Activated naive CD4-positive, alpha-beta T cell treated with anti-CD3 and anti-CD28 coated beads for 36 hours (primary cell): ENCODE measurements at regions of chr5 and their contacts with region 1.

Region 1: DNA sequence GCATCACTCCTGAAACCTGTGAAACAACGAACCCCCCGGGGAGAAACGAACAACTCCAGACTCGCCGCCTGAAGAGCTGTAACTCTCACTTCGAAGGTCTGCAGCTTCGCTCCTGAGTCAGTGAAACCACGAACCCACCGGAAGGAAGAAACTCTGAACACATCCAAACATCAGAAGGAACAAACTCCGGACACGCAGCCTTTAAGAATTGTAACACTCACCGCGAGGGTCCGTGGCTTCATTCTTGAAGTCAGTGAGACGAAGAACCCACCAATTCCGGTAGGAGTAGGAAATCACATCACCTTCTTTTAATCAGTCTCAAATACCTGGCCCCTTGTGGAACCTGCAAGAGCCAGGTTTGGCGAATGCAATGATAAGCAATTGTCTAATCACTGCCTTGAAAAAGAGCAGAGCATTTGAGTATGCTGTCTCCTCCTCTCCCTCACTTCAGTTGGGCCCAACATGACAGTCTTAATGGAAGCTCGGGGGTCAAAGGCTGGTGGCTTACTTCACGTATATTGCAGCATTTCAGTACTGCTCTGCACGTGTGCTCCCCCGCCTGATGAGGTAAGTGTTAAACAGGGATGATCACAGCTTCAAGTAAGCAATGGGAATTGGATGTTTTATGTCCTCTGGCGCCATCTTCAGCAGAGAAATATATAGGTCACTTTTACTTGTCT is 473 bp downstream of the IRGM start:
- DNase-seq: peak; percentile 83
- H3K4me3 Mint-ChIP-seq: peak overlapping the region; percentile 79
- H3K27ac Mint-ChIP-seq: peak overlapping the region; percentile 80
- H3K4me1 Mint-ChIP-seq: peaks cover 25% of the 10 kb centered on the region
- H3K27me3 Mint-ChIP-seq: no peaks in the 10 kb centered on the region

Region 2: GRCh38 chr5:150560401-150561193 is 286.2 kb before region 1 on chr5:
- CTCF ChIA-PET with region 1: interaction called, 63 read pairs
- intact Hi-C with region 1: loop called (anchors 1 kb)
- DNase-seq: peak; percentile 96
- H3K4me3 Mint-ChIP-seq: no peak overlapping the region
- H3K27ac Mint-ChIP-seq: no peak overlapping the region
- H3K4me1 Mint-ChIP-seq: no peaks in the 10 kb centered on the region
- H3K27me3 Mint-ChIP-seq: no peaks in the 10 kb centered on the region

Region 3: GRCh38 chr5:150656191-150657132 is 190.3 kb before region 1 on chr5:
- CTCF ChIA-PET with region 1: interaction called, 4 read pairs
- intact Hi-C with region 1: loop called (anchors 1 kb)
- DNase-seq: peak; percentile 77
- H3K4me3 Mint-ChIP-seq: peak overlapping the region; percentile 76
- H3K27ac Mint-ChIP-seq: no peak overlapping the region
- H3K4me1 Mint-ChIP-seq: peaks cover 2% of the 10 kb centered on the region
- H3K27me3 Mint-ChIP-seq: no peaks in the 10 kb centered on the region

Region 4: DNA sequence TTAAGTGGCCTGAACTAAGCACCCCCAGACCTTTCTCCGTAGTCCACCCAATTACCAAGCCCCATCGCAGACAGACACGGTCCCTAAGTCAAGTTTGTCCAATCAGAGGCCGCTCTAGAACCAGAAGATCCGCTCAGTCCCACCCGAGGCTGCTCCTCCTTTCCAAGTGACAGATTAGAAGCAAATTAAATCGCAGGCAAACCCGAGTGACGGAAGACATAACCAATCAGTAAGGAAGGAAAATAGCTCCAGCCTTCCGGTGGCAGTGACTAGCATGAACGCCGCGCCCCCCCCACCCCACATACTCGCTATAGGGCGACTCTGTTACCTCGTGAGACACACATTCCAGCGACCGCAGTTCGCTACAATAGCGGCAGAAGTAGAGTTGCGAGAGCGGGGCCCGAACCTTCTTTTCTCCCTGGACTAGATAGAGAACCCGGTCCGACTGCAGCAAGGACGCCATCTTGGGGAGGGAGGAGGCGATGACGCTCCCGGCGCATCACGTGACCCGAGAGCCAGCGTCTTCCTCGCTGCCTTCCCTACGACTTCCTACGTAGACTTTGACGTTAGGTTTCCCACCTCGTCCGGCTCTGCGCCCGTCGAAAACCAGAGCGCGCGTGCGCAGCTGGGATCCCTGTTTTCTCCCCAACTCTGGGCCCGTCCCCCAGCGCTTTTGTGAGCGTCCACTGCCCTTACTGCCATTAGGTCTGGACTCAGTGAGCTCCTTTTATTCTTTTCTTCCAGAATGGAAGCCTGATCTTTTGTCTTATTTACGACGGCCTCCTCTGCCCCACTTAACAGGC is 88.1 kb before region 1 on chr5 and contains the start of gene DCTN4:
- CTCF ChIA-PET with region 1: interaction called, 7 read pairs
- intact Hi-C with region 1: loop called (anchors 1 kb)
- DNase-seq: peak; percentile 96
- H3K4me3 Mint-ChIP-seq: no peak within 1 kb of the TSS
- H3K27ac Mint-ChIP-seq: no peak within 1 kb of the TSS
- H3K4me1 Mint-ChIP-seq: peaks cover 38% of the 10 kb centered on the region
- H3K27me3 Mint-ChIP-seq: no peaks in the 10 kb centered on the region
- total RNA-seq, gene DCTN4: 41.0 to 47.7 TPM

Region 5: GRCh38 chr5:150789943-150790611 is 56.7 kb before region 1 on chr5:
- CTCF ChIA-PET with region 1: interaction called, 19 read pairs
- intact Hi-C with region 1: loop called (anchors 2 kb)
- DNase-seq: peak; percentile 92
- H3K4me3 Mint-ChIP-seq: peak overlapping the region; percentile 64
- H3K27ac Mint-ChIP-seq: peak overlapping the region; percentile 97
- H3K4me1 Mint-ChIP-seq: peaks cover 65% of the 10 kb centered on the region
- H3K27me3 Mint-ChIP-seq: no peaks in the 10 kb centered on the region

Region 6: DNA sequence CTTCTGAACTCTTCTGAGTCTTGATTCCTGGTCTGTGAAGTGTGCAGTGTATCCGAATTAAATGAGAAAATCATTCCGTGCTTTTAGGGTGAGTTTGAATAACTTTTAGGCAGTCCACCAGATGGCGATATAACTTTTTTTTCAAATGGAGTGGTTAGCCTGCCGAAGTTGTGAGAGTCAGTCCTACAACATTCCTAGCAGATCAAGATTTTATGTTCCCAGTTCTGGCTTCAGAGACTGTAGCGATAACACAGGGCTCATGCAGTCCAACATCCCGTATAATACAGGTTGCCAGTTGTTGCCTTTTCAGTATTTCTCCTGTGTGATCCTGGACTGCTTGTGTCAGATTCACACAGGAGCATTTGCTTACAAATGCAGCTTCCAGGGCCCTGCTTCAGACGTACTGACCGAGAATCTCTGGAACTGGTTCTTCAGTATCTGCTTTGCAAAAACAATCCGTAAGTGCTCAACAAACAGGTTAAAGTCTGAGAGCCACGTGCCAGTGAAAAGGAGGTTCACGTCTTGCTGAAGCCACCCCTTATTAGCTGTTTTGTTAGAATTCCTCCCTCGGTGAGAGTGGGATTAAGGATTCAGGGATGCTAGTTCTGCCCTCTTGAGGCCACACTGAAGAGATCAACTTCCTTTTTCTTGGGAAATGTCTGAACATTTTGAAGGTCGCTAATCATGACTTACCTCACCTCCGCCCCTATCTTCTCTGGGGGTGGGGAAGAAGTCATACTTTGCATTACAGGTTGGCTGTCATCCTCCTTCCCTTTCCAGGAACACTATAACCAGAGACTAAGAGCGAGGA is 45.5 kb before region 1 on chr5:
- CTCF ChIA-PET with region 1: interaction called, 52 read pairs
- intact Hi-C with region 1: loop called (anchors 1 kb)
- DNase-seq: peak; percentile 31
- H3K4me3 Mint-ChIP-seq: no peak overlapping the region
- H3K27ac Mint-ChIP-seq: no peak overlapping the region
- H3K4me1 Mint-ChIP-seq: peaks cover 31% of the 10 kb centered on the region
- H3K27me3 Mint-ChIP-seq: no peaks in the 10 kb centered on the region